Panc1 (cell line): ENCODE measurements at regions of chr2 and their contacts with region 1.

Region 1: GRCh38 chr2:116570128-116570527 is 1244.4 kb upstream of the DDX18 start:
- DNase-seq: no peak
- ATAC-seq: no peak
- H3K4me3 ChIP-seq: no peak overlapping the region
- H3K27ac ChIP-seq: no peak overlapping the region
- H3K4me1 ChIP-seq: no peaks in the 10 kb centered on the region
- H3K27me3 ChIP-seq: no peaks in the 10 kb centered on the region
- CTCF ChIP-seq: no peak

Region 2: GRCh38 chr2:116211719-116212118 is 358.4 kb before region 1 on chr2:
- CTCF ChIA-PET with region 1: interaction called, 13 read pairs
- POLR2A ChIA-PET with region 1: no interaction called
- in situ Hi-C with region 1: no loop called
- intact Hi-C with region 1: no loop called
- DNase-seq: no peak
- ATAC-seq: no peak
- H3K4me3 ChIP-seq: no peak overlapping the region
- H3K27ac ChIP-seq: no peak overlapping the region
- H3K4me1 ChIP-seq: no peaks in the 10 kb centered on the region
- H3K27me3 ChIP-seq: no peaks in the 10 kb centered on the region
- CTCF ChIP-seq: no peak

Region 3: DNA sequence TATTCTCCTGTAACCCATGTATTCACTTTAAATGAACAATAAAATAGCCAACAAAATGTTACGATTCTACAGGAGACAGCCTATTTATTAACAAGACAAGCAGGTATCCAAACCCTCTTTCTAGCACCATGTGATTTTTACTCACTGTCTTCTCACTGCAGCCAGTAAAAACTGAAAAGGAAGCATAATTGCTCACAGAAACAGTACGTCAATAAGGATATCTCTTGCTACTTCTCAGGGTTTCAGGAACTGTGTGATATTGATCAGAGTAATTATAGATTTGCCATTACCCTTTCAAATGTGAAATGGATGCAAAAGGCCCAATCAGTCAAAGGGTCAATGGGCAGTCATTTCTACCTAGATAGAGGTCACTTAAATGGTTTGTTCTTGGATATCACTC is 229.4 kb before region 1 on chr2:
- CTCF ChIA-PET with region 1: no interaction called
- POLR2A ChIA-PET with region 1: no interaction called
- in situ Hi-C with region 1: no loop called
- intact Hi-C with region 1: no loop called
- DNase-seq: no peak
- ATAC-seq: no peak
- H3K4me3 ChIP-seq: no peak overlapping the region
- H3K27ac ChIP-seq: no peak overlapping the region
- H3K4me1 ChIP-seq: no peaks in the 10 kb centered on the region
- H3K27me3 ChIP-seq: no peaks in the 10 kb centered on the region
- CTCF ChIP-seq: no peak

Region 4: GRCh38 chr2:116416731-116417377 is 153.3 kb before region 1 on chr2:
- CTCF ChIA-PET with region 1: no interaction called
- POLR2A ChIA-PET with region 1: no interaction called
- in situ Hi-C with region 1: no loop called
- intact Hi-C with region 1: no loop called
- DNase-seq: no peak
- ATAC-seq: no peak
- H3K4me3 ChIP-seq: no peak overlapping the region
- H3K27ac ChIP-seq: no peak overlapping the region
- H3K4me1 ChIP-seq: no peaks in the 10 kb centered on the region
- H3K27me3 ChIP-seq: no peaks in the 10 kb centered on the region
- CTCF ChIP-seq: no peak